ENCODE measurements at regions of chr6 and their contacts with region 1.

Region 1: DNA sequence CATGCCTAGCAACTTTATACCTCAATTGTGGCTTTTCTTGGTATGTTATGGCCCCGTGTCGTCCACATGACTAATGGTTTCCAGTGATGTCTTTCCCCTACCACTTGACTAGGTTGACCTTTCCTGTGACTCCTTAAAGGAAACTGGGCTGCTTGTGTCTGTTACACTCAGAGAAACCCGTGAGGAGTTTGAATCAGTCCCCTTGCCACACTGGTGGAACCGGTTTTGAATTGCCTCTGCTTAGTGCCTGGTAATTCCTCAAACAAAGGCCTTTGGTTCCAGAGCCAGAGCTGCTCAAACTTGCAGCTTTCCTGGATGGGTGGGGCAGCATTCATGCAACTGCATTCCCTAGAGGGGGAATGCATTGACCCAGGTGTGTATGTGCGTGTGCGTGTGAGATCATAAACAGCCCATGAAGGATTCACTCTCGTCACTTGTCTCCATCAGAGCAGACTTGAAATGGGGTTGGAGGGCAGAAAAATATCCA is 22.0 kb downstream of the ECT2L start:
- DNase-seq: peak; percentile 33
- CTCF ChIP-seq: no peak

Region 2: GRCh38 chr6:138526822-138527235 is 291.0 kb before region 1 on chr6:
- in situ Hi-C with region 1: no loop called
- DNase-seq: no peak
- CTCF ChIP-seq: no peak

Region 3: DNA sequence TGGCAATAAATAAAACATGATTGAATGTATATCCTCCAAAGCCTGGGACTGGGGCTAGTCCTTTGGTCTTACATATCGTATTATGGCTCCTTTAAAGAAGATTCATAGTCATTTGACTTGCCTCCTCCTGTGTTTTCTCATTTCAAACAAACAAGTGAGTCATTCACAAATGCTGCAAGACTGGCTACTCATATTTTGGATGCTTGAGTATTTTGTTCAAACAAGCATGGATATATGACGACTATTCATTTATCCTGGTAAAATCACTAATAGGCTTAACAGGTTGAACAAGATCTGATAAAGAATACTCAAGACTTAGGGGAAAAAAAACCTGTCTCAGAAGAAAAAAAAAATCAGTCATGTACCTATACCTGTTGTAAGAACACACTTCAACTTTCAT is 155.4 kb before region 1 on chr6:
- in situ Hi-C with region 1: no loop called
- DNase-seq: no peak
- CTCF ChIP-seq: no peak

Region 4: DNA sequence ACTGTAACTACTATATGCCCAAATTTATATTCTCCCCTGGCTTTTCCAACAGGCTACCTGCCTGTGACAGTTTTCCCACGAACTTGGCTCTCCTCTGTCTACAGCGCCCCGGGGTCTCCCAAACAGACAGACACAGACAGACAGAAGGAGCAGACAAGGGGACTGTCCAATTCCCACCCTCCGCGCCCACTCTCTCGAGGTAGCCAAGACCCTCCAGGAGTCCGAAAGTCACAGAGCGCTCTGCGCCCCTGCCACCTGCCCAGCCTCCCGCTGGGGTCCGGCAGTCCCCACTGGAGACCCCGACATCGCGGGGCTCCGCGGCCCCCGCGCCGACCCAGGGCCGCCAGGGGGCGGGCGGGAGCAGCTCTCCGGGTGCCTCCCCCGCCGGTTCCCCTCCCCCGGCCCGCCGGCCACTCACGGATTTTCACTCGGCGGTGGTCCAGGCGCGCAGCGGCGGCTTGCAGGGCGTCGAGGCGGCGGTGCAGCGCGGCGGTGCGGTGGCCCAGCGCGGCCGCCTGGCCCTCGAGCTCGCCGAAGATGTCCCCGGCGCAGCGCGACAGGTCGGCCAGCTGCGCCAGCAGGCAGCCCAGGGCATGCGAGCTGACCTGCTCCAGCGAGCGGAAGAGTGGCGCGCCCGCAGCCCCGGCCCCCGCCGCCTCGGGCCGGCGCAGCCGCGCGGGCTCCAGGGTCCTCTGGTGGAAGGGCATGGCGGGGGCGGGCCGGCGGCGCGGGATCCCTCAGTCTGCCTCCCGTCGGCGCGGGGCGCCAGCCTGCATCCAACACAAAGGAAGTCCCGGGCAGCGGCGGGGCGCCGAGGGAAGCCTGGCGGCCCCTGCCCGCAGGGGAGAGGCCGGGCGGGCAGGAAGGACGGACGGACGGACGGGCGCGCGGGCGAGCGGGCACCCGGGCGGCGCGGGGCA is 125.5 kb before region 1 on chr6:
- in situ Hi-C with region 1: no loop called
- DNase-seq: peak; percentile 92
- CTCF ChIP-seq: peak; percentile 73

Region 5: DNA sequence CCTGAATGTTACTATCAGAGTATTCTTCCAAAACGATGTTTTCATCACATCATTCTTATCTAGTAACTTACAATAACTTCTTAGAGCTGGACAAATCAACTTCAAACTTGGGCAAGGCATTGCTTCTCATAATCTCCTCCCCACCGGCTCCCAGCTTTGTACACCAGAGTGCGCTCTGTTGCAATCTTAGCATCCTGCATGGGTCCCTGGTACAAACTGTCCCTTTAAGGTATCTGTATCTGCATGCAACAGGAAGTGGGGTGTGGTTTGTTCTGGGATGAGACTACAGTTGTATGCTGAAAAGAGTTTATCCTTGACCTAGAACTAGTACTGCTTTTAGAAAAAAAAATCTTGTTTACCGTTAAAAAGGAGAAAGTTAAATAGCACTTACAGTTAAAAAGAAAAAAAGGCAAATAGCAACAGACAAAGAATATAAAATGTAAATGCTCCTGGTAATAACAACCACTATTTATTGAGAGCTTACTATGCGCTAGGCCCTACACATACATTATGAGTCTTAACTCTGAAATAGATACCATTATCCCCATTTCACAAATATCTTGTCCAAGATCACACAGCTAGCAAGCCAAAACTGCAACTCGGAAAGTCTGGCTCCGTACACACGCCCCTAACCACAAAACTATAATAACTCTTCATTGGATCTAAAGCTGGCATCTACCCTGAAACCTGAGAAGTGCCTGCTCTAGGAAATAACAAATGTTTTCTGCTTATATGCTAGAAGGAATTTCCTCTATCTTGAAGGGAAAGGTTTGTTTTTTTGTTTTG is 307.2 kb after region 1 on chr6:
- in situ Hi-C with region 1: loop called (anchors 25 kb)
- DNase-seq: peak; percentile 45
- CTCF ChIP-seq: peak; percentile 30

Region 6: GRCh38 chr6:139364302-139364981 is 546.6 kb after region 1 on chr6:
- in situ Hi-C with region 1: loop called (anchors 10 kb)
- DNase-seq: peak; percentile 55
- CTCF ChIP-seq: no peak

Region 7: GRCh38 chr6:140138311-140139010 is 1320.6 kb after region 1 on chr6:
- in situ Hi-C with region 1: no loop called
- DNase-seq: no peak
- CTCF ChIP-seq: no peak

Measured in GM13976 (cell line).